ENCODE measurements at regions of chr17 and their contacts with region 1.

Region 1: GRCh38 chr17:76557368-76558197 is 17.7 kb downstream of the PRCD start:
- DNase-seq: peak; percentile 96
- H3K4me3 Mint-ChIP-seq: peak overlapping the region; percentile 92
- H3K27ac Mint-ChIP-seq: peak overlapping the region; percentile 97
- H3K4me1 Mint-ChIP-seq: peaks cover 19% of the 10 kb centered on the region
- H3K27me3 Mint-ChIP-seq: no peaks in the 10 kb centered on the region
- CTCF ChIP-seq: no peak

Region 2: DNA sequence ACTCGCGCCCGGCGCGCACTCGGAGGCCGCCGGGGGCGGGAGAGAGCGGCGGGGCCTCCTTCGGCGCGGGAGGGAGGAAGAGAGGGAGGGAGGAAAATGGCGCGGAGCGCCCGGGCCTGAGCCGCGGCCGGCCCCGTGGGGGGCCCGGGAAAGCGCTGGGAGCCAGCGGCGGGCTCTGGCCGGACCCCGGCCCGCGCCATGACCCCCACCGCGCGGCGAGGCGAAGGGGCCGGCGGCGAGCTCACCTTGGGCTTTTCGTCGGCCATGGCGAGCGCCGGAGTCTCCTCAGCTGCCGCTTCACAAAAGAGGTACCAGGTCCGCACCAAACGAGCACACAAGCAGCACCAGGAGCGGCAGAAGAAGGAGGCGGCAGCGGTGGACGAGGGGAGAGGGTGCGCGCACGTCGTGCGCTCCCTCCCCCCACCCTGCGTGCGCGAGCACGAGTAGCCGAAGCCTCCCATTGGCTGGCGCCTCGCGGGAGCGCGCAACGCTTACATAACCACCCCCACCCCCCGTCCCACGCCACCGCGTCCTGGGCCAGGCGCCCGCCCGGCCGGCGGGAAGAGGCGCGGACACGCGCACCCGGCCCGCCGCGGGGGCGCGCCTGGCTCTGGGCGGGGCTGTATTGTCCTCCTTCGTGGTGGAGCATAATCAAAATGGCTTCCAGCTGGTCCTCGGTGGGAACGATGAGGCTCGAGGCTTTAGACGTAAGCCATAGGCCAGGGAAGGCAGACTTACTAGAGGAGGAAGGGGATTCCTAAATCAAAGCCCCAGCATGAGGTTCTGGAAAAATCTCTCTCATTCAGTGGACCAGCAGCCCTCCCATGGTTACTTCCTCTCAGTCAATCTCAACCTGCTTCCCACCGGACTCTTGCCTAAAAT is 1374.8 kb before region 1 on chr17 and contains the start of gene SUMO2:
- CTCF ChIA-PET with region 1: no interaction called
- POLR2A ChIA-PET with region 1: no interaction called
- intact Hi-C with region 1: no loop called
- DNase-seq: peak; percentile 92
- H3K4me3 Mint-ChIP-seq: peak within 1 kb of the TSS; percentile 80
- H3K27ac Mint-ChIP-seq: peak within 1 kb of the TSS; percentile 77
- H3K4me1 Mint-ChIP-seq: peaks cover 20% of the 10 kb centered on the region
- H3K27me3 Mint-ChIP-seq: no peaks in the 10 kb centered on the region
- CTCF ChIP-seq: peak; percentile 20
- total RNA-seq, gene SUMO2: 186 and 194 TPM in 2 replicates

Region 3: GRCh38 chr17:76353599-76354316 is 203.8 kb before region 1 on chr17 and contains the start of gene PRPSAP1:
- CTCF ChIA-PET with region 1: no interaction called
- POLR2A ChIA-PET with region 1: interaction called, 11 read pairs
- intact Hi-C with region 1: no loop called
- DNase-seq: peak; percentile 94
- H3K4me3 Mint-ChIP-seq: peak within 1 kb of the TSS; percentile 95
- H3K27ac Mint-ChIP-seq: peak within 1 kb of the TSS; percentile 98
- H3K4me1 Mint-ChIP-seq: peaks cover 8% of the 10 kb centered on the region
- H3K27me3 Mint-ChIP-seq: no peaks in the 10 kb centered on the region
- CTCF ChIP-seq: peak; percentile 35
- total RNA-seq, gene PRPSAP1: 25.9 and 42.3 TPM in 2 replicates

Region 4: GRCh38 chr17:76547184-76547641 is 10.4 kb before region 1 on chr17:
- CTCF ChIA-PET with region 1: interaction called, 26 read pairs
- POLR2A ChIA-PET with region 1: interaction called, 68 read pairs
- intact Hi-C with region 1: no loop called
- DNase-seq: peak; percentile 81
- H3K4me3 Mint-ChIP-seq: no peak overlapping the region
- H3K27ac Mint-ChIP-seq: no peak overlapping the region
- H3K4me1 Mint-ChIP-seq: peaks cover 10% of the 10 kb centered on the region
- H3K27me3 Mint-ChIP-seq: peaks cover 12% of the 10 kb centered on the region
- CTCF ChIP-seq: peak; percentile 51

Region 5: DNA sequence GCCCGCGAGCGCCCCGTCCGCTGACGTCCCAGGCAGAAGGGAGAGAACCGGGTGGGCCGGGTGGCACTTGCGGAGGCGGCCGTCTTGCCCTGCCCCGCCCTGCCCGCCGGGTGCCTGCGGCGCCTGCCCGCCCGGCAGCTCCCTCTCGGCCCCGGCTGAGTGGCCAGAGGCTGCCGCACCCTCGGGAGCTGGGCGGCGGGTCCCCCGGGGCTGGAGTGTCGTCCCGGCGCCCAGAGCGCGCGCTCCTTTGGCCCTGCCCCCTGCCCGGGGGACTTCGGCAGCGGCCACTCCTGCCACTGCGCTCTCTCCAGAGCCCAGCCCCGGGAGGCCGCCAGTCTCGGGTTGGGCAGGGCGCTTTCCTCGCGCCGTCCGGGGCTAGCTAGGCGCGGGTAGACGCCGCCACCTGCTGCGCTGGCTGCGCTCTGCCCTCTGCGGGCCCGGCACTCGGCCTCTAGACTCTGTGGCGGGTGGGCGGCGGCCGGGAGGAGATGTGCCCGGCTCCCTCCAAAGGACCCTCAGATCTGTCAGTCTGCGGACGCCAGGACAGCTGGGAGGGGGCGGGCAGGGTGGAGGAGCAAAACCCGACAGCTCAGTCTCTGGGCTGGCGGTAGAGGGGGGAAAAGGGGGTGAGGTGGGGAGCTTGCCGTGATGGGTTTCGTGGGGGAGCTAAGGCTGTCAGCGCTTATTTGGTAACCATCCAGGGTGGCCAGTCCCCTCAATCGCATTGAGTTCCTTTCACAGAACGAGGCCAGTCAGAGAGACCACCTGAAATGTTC is 28.4 kb after region 1 on chr17 and contains the start of gene ST6GALNAC2:
- CTCF ChIA-PET with region 1: interaction called, 8 read pairs
- POLR2A ChIA-PET with region 1: interaction called, 171 read pairs
- intact Hi-C with region 1: no loop called
- DNase-seq: peak; percentile 72
- H3K4me3 Mint-ChIP-seq: peak within 1 kb of the TSS; percentile 74
- H3K27ac Mint-ChIP-seq: no peak within 1 kb of the TSS
- H3K4me1 Mint-ChIP-seq: peaks cover 11% of the 10 kb centered on the region
- H3K27me3 Mint-ChIP-seq: no peaks in the 10 kb centered on the region
- CTCF ChIP-seq: peak; percentile 58
- total RNA-seq, gene ST6GALNAC2: 5.0 and 7.7 TPM in 2 replicates

Region 6: DNA sequence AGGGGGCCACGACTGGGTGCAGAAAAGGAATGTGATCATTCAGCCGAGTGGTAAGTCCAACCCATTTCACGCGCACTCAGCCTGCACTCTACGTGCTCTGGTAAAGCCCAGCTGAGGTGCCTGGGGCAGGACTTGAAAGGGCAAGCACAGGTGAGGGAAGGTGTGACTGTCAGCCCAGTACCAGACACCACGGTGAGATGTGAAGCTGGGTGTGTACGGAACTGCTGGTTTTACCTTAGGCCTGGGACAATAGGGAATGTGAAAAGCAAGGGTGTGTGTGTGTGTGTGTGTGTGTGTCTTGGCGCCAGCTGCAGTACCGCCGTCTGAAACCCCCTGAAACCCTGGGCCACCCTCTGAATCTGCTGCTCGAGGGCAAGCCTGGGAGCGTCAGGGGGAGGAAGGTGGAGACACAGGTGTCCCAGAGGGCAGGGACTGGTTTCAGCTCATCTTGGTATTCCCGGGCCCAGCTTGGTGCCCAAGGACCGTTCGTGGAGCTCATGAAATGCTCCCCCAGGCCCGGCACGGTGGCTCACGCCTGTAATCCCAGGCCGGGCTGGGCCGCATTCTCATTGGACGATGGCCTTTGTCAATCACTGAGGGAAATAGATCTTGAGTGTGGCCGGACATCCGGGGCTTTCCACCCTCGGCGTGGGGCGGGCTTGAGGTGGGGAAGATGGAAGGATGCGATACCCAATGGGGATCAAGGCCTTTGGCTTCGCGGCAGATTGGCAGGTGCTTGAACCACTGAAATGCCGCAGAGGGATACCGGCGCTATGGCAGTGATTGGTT is 113.7 kb after region 1 on chr17:
- CTCF ChIA-PET with region 1: no interaction called
- POLR2A ChIA-PET with region 1: interaction called, 24 read pairs
- intact Hi-C with region 1: no loop called
- DNase-seq: peak; percentile 100
- H3K4me3 Mint-ChIP-seq: peak overlapping the region; percentile 89
- H3K27ac Mint-ChIP-seq: peak overlapping the region; percentile 92
- H3K4me1 Mint-ChIP-seq: no peaks in the 10 kb centered on the region
- H3K27me3 Mint-ChIP-seq: no peaks in the 10 kb centered on the region
- CTCF ChIP-seq: no peak

Region 7: GRCh38 chr17:76737082-76737675 is 179.6 kb after region 1 on chr17 and contains the start of gene SRSF2:
- CTCF ChIA-PET with region 1: interaction called, 4 read pairs
- POLR2A ChIA-PET with region 1: interaction called, 76 read pairs
- intact Hi-C with region 1: no loop called
- DNase-seq: peak; percentile 98
- H3K4me3 Mint-ChIP-seq: peak within 1 kb of the TSS; percentile 100
- H3K27ac Mint-ChIP-seq: peak within 1 kb of the TSS; percentile 97
- H3K4me1 Mint-ChIP-seq: peaks cover 20% of the 10 kb centered on the region
- H3K27me3 Mint-ChIP-seq: no peaks in the 10 kb centered on the region
- CTCF ChIP-seq: no peak
- total RNA-seq, gene SRSF2: 161 and 168 TPM in 2 replicates

Measured in MCF 10A (cell line).